Right ventricle myocardium superior (tissue), 1 donor: ENCODE measurements at regions of chr12 and their contacts with region 1.

Region 1: GRCh38 chr12:85866986-85867776 is 6.9 kb upstream of the NTS start:
- DNase-seq: no peak
- ATAC-seq: peak; percentile 93

Region 2: GRCh38 chr12:85708775-85709174 is 158.4 kb before region 1 on chr12:
- intact Hi-C with region 1: loop called (anchors 10 kb)
- DNase-seq: no peak
- ATAC-seq: no peak

Region 3: DNA sequence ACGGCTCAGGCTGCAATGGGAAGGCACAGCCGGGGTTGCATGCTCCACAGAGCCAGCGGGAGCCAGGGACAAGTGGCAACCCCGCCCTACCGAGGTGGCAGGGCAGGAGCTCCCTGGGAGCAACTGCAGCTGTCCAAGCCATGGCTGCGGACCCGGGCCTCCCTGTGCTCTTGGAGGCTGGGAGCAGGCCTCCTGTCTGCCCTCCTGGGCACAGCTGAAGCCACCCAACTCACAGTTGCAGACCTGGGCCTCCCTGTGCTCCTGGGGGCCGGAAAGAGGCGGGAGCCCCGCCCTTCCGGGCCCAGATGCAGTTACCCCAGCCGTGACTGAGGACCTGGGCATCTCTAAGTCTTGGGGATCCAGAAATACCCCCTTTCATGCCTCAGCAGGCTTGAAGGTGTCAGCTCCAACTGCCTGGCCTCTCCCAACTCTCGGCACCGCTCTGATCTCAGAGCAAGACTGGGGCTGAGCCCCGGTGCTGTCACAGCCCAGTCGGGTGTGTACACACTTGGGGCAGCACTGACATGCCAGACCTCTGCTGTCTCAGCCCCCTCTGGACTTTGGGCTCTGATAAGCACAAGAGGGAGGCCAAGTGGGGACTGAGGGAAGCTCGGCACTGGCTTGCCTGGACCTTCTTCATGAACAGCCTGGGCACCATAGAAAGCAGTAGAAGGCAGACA is 23.4 kb before region 1 on chr12:
- intact Hi-C with region 1: no loop called
- DNase-seq: no peak
- ATAC-seq: no peak